ENCODE measurements at regions of chr10 and their contacts with region 1.

Region 1: DNA sequence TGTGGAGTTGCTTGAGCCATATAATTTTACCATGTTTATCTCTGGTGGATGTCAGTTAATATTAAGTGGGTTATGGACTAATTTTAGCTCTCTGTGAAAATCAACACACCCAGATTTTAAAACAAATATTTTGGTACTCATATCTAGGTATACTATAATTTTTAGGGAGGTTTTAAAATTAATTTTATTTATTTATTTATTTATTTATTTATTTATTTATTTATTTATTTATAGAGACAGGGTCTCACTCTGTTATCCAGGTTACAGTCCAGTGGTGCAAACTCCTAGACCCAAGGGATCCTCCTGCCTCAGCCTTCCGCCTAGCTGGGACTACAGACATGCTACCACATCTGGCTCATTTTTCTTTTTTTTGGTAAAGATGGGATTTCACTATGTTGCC is 7.3 kb upstream of the CREM start:
- DNase-seq: no peak
- H3K4me3 ChIP-seq: no peak overlapping the region
- CTCF ChIP-seq: no peak

Region 2: DNA sequence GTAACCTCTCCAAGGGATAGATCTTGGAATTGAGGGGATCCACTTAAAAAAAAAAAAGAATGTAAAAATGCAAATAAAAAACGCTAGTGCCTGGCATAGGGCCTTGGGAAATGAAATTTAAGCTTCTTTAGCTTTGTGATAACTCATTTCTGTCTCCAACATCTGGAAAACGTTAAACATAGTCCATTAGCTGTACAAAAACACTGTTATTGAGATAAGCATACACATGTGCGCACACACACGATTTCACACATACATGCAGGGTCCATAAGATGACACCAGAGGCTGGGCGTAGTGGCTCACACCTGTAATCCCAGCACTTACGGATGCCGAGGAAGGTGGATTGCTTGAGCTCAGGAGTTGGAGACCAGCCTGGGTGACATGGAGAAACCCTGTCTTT is 15.5 kb before region 1 on chr10:
- CTCF ChIA-PET with region 1: interaction called, 14 read pairs
- POLR2A ChIA-PET with region 1: no interaction called
- DNase-seq: no peak
- H3K4me3 ChIP-seq: no peak overlapping the region
- CTCF ChIP-seq: no peak

Region 3: DNA sequence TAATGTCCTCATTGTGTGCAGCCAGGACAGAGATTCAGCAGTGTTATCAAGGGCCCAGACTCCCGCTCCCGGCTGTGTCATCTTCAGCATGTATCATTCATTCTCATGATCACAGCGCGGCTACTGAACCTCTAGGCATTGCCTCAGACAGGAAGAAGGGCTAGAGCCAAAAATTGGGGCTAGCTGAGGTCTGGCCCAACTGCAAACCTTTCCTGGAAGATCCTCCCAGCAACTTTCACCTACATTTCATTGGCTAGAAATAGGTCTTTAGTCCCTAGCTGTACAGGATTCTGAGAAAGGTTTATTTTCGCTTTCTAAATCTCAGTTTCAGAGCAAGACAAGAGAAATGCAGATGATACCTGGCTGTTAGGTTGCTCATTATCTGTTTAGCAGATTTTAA is 89.2 kb after region 1 on chr10:
- CTCF ChIA-PET with region 1: interaction called, 283 read pairs
- POLR2A ChIA-PET with region 1: no interaction called
- DNase-seq: no peak
- H3K4me3 ChIP-seq: no peak overlapping the region
- CTCF ChIP-seq: no peak

Region 4: DNA sequence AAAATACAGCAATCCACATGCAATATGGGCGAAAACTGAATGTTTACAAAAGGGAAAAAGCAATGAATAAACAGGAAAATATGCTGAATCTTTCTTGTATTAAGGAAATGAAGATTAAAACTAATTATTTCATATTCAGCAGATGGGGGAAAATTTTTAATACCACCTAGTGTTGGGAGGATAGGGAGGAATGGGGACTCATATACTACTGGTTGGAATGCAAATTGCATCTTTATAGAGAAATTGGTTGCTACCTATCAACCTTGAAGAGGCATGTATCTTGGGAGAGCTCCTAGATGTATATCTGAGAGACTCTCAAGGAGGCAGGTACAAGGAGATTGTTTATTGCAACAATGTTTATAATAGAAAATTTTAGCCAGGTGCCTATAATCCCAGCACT is 108.7 kb after region 1 on chr10:
- CTCF ChIA-PET with region 1: interaction called, 283 read pairs
- POLR2A ChIA-PET with region 1: no interaction called
- DNase-seq: no peak
- H3K4me3 ChIP-seq: no peak overlapping the region
- CTCF ChIP-seq: no peak

Measured in AG04449 (cell line).